OCI-LY7 (cell line): ENCODE measurements at regions of chr1 and their contacts with region 1.

Region 1: DNA sequence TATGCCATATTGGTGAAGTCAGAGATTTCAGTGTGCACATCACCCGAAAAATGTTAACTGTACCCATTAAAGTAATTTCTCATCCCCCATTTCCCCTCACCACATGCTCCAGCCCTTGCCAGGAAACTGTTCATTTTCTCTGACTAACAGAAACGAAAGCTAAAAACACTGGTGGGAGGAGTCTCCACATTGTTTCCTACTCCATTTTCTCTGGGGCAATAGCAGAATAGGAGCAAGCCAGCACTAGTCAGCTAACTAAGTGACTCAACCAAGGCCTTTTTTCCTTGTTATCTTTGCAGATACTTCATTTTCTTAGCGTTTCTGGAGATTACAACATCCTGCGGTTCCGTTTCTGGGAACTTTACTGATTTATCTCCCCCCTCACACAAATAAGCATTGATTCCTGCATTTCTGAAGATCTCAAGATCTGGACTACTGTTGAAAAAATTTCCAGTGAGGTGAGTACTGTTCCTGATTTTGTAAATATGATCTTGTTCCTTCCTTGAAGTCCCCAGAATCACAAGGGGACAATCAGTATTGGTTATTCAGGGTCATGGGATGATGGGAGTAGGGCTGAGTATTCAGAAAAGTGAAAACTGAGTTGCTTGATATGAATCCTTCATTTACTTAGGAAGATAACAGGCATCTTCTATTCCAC is at the start of gene IFI16:
- DNase-seq: peak; percentile 80
- H3K4me3 ChIP-seq: peak within 1 kb of the TSS; percentile 88
- H3K27ac ChIP-seq: peak within 1 kb of the TSS; percentile 89
- H3K4me1 ChIP-seq: peaks cover 67% of the 10 kb centered on the region
- CTCF ChIP-seq: no peak
- total RNA-seq, gene IFI16: 96.5 and 99.3 TPM in 2 replicates

Region 2: GRCh38 chr1:158177700-158178450 is 832.0 kb before region 1 on chr1:
- CTCF ChIA-PET with region 1: interaction called, 3 read pairs
- POLR2A ChIA-PET with region 1: interaction called, 3 read pairs
- intact Hi-C with region 1: loop called (anchors 5 kb)
- DNase-seq: peak; percentile 85
- H3K4me3 ChIP-seq: peak overlapping the region; percentile 68
- H3K27ac ChIP-seq: peak overlapping the region; percentile 86
- H3K4me1 ChIP-seq: peaks cover 69% of the 10 kb centered on the region
- CTCF ChIP-seq: no peak

Region 3: GRCh38 chr1:158285756-158286241 is 724.0 kb before region 1 on chr1:
- CTCF ChIA-PET with region 1: no interaction called
- POLR2A ChIA-PET with region 1: interaction called, 3 read pairs
- intact Hi-C with region 1: loop called (anchors 5 kb)
- DNase-seq: peak; percentile 92
- H3K4me3 ChIP-seq: peak overlapping the region; percentile 61
- H3K27ac ChIP-seq: peak overlapping the region; percentile 89
- H3K4me1 ChIP-seq: peaks cover 78% of the 10 kb centered on the region
- CTCF ChIP-seq: no peak

Region 4: GRCh38 chr1:158564608-158565007 is 445.2 kb before region 1 on chr1:
- CTCF ChIA-PET with region 1: no interaction called
- POLR2A ChIA-PET with region 1: no interaction called
- intact Hi-C with region 1: loop called (anchors 10 kb)
- DNase-seq: peak; percentile 78
- H3K4me3 ChIP-seq: peak overlapping the region; percentile 32
- H3K27ac ChIP-seq: peak overlapping the region; percentile 58
- H3K4me1 ChIP-seq: peaks cover 18% of the 10 kb centered on the region
- CTCF ChIP-seq: no peak

Region 5: DNA sequence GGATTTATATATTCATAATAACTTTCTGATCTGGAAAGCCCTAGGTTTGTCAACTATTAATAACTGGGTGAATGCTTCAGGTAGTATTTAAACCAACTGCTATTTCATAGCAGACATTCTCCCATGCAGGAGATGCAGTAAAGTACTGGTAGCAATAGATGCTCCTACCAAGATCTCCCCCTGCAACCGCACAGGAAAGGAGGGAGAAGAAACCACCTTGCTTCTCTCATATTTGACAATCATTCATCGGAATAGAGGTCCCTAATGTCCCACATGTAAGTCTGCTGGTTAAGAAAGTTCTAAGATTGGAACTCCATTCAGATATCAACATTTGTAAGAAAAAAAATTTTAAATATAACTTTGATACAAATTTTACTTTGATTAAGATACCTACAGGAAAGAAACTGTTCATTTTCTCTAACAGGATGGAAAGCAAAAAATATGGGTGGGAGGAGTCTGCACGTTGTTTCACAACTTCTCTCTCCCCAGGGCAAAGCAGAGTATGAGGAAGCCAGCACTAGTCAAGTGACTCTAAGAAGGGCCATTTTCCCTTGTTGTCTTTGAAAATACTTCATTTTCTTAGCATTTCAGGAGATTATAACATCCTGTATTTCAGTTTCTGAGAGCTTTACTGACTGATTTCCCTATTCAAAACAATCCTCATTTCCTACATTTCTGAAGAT is 78.6 kb before region 1 on chr1 and contains the start of gene PYHIN1:
- CTCF ChIA-PET with region 1: no interaction called
- POLR2A ChIA-PET with region 1: interaction called, 3 read pairs
- intact Hi-C with region 1: loop called (anchors 5 kb)
- DNase-seq: peak; percentile 79
- H3K4me3 ChIP-seq: peak within 1 kb of the TSS; percentile 76
- H3K27ac ChIP-seq: peak within 1 kb of the TSS; percentile 76
- H3K4me1 ChIP-seq: peaks cover 37% of the 10 kb centered on the region
- CTCF ChIP-seq: no peak
- total RNA-seq, gene PYHIN1: 42.5 and 44.6 TPM in 2 replicates

Region 6: DNA sequence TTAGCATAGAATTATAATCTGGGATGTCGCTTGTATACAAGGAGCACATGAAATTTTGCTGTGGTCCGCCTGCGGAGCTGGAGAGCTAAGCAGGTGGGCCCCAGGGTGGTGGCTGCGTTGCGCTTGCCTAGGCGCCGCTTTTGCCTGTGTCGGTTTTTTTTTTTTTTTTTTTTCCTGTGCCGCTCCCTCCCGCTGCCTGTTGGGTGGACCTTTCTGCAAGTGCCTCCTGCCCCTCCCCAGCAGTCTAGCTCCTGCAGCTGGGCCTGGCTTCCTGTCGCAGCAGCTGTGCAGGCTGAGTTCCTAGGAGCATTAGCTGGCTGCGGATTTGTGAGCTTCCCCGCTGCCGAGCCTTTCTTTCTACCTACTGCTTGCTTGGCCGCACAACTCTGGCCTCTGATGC is 57.9 kb before region 1 on chr1:
- CTCF ChIA-PET with region 1: no interaction called
- POLR2A ChIA-PET with region 1: interaction called, 14 read pairs
- intact Hi-C with region 1: loop called (anchors 1 kb)
- DNase-seq: peak; percentile 97
- H3K4me3 ChIP-seq: peak overlapping the region; percentile 61
- H3K27ac ChIP-seq: peak overlapping the region; percentile 99
- H3K4me1 ChIP-seq: peaks cover 31% of the 10 kb centered on the region
- CTCF ChIP-seq: peak; percentile 52; the same call in 1 of the 2 replicates

Region 7: GRCh38 chr1:159077120-159077961 is 67.5 kb after region 1 on chr1:
- CTCF ChIA-PET with region 1: interaction called, 5 read pairs
- POLR2A ChIA-PET with region 1: interaction called, 93 read pairs
- intact Hi-C with region 1: no loop called
- DNase-seq: peak; percentile 67
- H3K4me3 ChIP-seq: peak overlapping the region; percentile 68
- H3K27ac ChIP-seq: peak overlapping the region; percentile 86
- H3K4me1 ChIP-seq: peaks cover 41% of the 10 kb centered on the region
- CTCF ChIP-seq: no peak